ENCODE measurements at regions of chr12 and their contacts with region 1.

Region 1: DNA sequence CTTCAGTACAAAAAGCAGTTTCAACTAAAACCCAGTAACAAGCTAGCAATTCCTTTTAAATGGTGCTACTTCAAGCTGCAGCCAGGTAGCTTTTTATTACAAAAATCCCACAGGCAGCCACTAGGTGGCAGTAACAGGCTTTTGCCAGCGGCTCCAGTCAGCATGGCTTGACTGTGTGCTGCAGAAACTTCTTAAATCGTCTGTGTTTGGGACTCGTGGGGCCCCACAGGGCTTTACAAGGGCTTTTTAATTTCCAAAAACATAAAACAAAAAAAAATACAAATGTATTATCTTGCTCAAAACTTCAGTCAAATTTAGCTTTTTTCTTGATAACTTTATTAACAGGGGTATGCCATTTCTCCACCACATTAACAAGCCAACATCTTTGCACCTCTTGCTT is 3.6 kb upstream of the CLEC4E start:
- DNase-seq: no peak
- ATAC-seq: peak; percentile 66
- H3K4me3 Mint-ChIP-seq: no peak overlapping the region
- H3K27ac Mint-ChIP-seq: no peak overlapping the region
- H3K4me1 Mint-ChIP-seq: no peaks in the 10 kb centered on the region
- H3K27me3 Mint-ChIP-seq: peaks cover 23% of the 10 kb centered on the region
- CTCF ChIP-seq: peak; percentile 96

Region 2: GRCh38 chr12:8527250-8528130 is 16.8 kb before region 1 on chr12:
- CTCF ChIA-PET with region 1: interaction called, 13 read pairs
- POLR2A ChIA-PET with region 1: no interaction called
- intact Hi-C with region 1: no loop called
- DNase-seq: no peak
- ATAC-seq: no peak
- H3K4me3 Mint-ChIP-seq: no peak overlapping the region
- H3K27ac Mint-ChIP-seq: no peak overlapping the region
- H3K4me1 Mint-ChIP-seq: no peaks in the 10 kb centered on the region
- H3K27me3 Mint-ChIP-seq: peaks cover 44% of the 10 kb centered on the region
- CTCF ChIP-seq: no peak

Region 3: DNA sequence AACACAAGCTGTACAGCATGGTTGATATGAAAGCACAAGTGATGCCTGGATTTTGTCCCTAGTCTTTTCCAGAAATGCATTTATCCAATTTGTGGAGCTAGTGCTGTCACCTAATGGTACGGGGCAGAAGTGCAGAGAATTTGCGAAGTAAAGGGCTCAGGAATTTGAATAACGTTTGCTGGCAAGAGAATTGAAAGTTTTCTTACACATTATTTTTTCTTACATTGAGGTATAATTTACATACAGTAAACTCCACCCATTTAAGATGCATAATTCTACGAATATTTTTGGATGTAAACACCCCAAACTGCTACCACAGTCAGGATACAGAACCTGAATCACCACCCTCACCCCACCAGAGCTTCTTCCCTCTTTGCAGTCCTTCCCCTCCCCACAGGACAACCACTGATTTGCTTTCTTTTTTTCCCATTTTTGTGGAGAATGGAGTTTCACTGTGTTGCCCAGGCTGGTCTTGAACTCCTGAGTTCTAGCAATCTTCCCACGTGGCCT is 64.8 kb after region 1 on chr12:
- CTCF ChIA-PET with region 1: interaction called, 22 read pairs
- POLR2A ChIA-PET with region 1: interaction called, 3 read pairs
- intact Hi-C with region 1: loop called (anchors 1 kb)
- DNase-seq: no peak
- ATAC-seq: peak; percentile 40
- H3K4me3 Mint-ChIP-seq: peak overlapping the region; percentile 78
- H3K27ac Mint-ChIP-seq: no peak overlapping the region
- H3K4me1 Mint-ChIP-seq: peaks cover 29% of the 10 kb centered on the region
- H3K27me3 Mint-ChIP-seq: peaks cover 2% of the 10 kb centered on the region
- CTCF ChIP-seq: no peak

Region 4: DNA sequence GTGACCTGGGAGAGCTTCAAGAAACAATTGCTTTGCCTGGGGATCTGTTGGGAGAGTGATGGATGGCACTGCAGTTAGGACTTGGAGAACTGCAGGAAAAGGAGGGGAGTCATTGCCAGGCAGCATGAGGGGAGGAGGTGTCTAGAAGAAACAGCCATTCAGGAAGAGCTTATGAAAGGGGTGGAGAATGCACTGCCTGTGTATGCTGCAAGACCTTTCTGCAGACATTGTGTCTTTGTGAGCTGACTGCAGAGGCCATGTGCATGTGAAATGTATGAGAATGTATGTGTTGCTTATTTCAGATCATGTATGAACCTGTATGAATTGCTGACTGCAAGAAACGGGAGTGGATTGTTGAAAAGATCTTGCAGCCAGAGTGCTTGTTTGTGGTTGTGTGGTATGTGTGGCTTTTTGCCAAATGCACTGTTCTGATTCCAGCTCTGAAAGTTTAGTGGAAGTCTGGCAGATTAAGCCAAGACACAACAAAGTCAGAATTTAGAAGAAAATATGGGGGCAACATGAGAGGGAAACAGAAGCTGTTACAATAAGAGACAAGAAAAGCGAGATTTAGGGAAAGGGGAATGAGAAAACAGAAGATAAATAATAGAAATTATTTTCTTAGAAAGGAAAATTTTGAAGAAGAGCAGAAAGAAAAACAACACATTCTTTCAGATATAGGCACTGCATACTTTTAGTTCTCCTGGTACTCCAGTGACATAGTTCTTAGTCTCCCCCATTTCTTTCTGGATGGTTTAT is 143.7 kb after region 1 on chr12:
- CTCF ChIA-PET with region 1: no interaction called
- POLR2A ChIA-PET with region 1: no interaction called
- intact Hi-C with region 1: loop called (anchors 2 kb)
- DNase-seq: no peak
- ATAC-seq: no peak
- H3K4me3 Mint-ChIP-seq: no peak overlapping the region
- H3K27ac Mint-ChIP-seq: no peak overlapping the region
- H3K4me1 Mint-ChIP-seq: peaks cover 11% of the 10 kb centered on the region
- H3K27me3 Mint-ChIP-seq: peaks cover 4% of the 10 kb centered on the region
- CTCF ChIP-seq: no peak

Region 5: DNA sequence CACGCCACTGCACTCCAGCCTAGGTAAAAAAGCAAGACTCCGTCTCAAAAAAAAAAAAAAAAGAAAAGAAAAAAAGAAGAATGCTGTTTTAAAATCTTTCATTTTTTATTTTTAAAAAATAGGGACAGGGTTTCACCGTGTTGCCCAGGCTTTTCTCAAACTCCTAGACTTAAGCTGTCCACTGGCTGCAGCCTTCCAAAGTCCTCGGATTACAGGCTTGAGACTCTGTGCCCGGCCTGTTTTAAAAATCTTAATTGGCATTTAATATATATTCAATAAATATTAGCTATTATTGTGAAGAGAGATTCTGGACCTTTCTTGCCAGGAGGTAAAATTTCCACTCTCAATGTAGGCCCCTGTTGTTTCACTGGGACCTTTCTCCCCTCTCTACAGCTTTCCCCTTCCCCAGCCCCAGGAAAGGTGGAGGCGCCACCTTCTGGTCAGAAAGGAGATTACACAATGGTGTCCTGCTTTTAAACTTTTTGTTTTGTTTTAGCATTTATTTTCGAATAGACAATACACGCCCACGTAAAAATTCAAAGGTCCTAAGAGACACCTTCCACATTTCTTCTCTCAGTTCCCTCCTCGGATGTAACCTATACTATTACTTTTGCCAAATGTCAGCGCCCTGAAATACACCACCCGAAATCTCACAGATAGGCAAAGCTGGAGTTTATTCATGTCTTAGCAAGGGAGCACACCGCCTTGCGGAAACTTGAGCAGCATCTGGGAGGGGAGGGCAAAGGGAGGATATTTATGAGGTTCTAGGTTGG is 346.2 kb after region 1 on chr12:
- CTCF ChIA-PET with region 1: interaction called, 18 read pairs
- POLR2A ChIA-PET with region 1: no interaction called
- intact Hi-C with region 1: loop called (anchors 1 kb)
- DNase-seq: no peak
- ATAC-seq: peak; percentile 87
- H3K4me3 Mint-ChIP-seq: peak overlapping the region; percentile 83
- H3K27ac Mint-ChIP-seq: peak overlapping the region; percentile 43
- H3K4me1 Mint-ChIP-seq: peaks cover 5% of the 10 kb centered on the region
- H3K27me3 Mint-ChIP-seq: peaks cover 2% of the 10 kb centered on the region
- CTCF ChIP-seq: peak; percentile 96

Region 6: DNA sequence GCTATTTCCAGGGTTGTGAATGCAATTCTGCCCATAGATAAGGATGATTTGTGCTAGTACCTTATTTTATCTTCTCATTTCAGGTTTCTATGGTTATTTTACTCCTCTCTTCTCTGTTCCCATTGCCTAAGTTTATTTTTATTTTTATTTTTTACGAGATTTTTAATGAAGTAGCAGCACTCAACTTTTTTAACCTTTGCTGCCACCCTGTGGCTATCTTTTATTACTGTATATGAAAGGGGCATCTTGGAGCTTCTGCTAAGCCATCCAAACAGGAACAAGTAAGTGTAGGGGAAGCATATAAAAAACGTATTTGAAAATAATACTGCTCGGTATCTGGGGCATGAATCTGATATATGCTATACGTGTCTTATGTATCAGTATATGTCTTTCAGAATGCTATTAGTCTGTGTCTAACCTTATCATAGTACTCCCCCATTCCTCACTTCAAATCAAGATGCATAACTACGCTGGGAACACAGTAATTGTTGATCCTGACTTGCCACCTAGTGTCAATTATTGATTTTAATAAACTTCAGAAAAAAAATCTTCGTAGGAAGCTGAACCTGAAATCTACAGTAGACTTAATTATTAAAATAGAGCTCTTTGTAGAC is 505.3 kb after region 1 on chr12:
- CTCF ChIA-PET with region 1: interaction called, 21 read pairs
- POLR2A ChIA-PET with region 1: no interaction called
- intact Hi-C with region 1: loop called (anchors 1 kb)
- DNase-seq: no peak
- ATAC-seq: peak; percentile 60
- H3K4me3 Mint-ChIP-seq: no peak overlapping the region
- H3K27ac Mint-ChIP-seq: no peak overlapping the region
- H3K4me1 Mint-ChIP-seq: no peaks in the 10 kb centered on the region
- H3K27me3 Mint-ChIP-seq: peaks cover 6% of the 10 kb centered on the region
- CTCF ChIP-seq: no peak

Region 7: DNA sequence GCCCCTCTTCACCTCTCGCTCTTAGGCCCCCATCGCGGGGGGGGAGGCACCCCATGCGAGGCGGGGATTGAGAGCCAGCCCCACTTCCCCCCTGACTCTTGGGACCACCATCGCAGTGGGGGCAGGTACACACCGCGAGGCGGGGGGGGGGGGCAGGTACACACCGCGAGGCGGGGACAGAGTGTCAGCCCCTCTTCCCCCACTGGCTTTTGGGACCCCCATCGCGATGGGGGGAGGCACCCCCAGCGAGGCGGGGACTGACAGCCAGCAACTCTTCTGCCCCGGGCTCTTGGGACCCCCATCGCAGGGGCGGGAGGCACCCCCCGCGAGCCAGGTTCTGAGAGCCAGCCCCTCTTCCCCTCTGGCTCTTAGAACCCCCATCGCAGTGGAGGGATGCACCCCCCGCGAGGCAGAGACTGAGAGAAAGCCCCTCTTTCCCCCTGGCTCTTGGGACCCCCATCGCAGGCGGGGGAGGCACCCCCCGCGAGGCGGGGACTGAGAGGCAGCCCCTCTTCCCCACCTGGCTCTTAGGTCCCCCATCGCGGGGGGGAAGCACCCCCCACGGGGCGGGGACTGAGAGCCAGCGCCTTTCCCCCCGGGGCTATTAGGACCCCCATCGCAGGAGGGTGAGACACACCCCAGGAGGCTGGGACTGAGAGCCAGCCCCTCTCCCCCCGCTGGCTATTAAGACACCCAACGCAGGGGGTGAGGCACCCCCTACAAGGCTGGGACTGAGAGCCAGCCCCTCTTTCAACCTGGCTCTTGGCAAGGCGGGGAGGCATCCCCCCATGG is 860.4 kb after region 1 on chr12:
- CTCF ChIA-PET with region 1: no interaction called
- POLR2A ChIA-PET with region 1: no interaction called
- intact Hi-C with region 1: no loop called
- DNase-seq: no peak
- ATAC-seq: no peak
- H3K4me3 Mint-ChIP-seq: no peak overlapping the region
- H3K27ac Mint-ChIP-seq: no peak overlapping the region
- H3K4me1 Mint-ChIP-seq: no peaks in the 10 kb centered on the region
- H3K27me3 Mint-ChIP-seq: no peaks in the 10 kb centered on the region
- CTCF ChIP-seq: no peak

Measured in activated B cell treated with CpG ODN at 0.5 μM for 24 hours (primary cell).